CD4-positive, alpha-beta memory T cell (primary cell): ENCODE measurements at regions of chr1 and their contacts with region 1.

Region 1: DNA sequence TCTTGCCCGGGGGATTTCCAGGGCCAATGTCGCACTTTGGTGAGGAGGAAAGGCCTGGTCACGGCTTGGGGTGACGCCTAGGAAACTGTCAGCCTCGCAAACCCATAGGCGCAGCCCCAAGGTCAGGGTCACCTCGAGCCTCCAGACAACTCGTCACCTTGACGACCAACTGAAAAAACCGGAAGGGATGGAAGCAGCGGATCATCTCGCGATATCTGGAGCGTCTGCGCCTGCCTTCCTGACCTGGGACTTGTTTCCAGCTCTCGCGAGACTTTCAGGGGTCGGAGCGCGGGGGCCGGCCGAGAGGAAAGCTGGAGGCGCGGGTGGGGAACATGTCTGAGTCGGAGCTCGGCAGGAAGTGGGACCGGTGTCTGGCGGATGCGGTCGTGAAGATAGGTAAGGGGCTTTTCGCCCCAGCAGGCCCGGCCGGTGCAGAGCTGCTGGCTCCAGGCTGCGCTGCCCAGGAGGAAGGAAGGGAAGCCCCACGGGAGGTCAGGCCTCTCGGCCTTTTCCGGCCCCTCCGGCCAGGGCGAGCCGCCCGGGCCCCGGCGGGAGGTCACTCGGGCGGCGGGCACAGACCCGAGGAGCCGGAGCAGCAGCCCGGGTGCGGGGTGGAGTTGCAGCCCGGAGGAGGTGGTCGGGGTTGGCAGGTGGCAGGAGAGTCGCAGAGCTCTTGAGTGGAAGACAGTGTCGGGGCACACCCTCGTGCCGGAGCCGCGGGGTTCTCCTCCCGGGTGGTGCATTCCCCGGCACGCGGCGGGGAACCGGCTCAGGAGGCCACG is 47.2 kb upstream of the NBL1 start:
- DNase-seq: peak; percentile 97 to 99 (median 98)
- H3K4me3 ChIP-seq: peak overlapping the region; percentile 63 to 88
- H3K4me3 Mint-ChIP-seq: peak overlapping the region; percentile 89 to 100 (median 98)
- H3K27ac ChIP-seq: peak overlapping the region; percentile 100
- H3K27ac Mint-ChIP-seq: peak overlapping the region; percentile 98 to 100 (median 100)
- H3K4me1 ChIP-seq: peaks cover 51% of the 10 kb centered on the region
- H3K4me1 Mint-ChIP-seq: peaks cover 33 to 54% (median 44%) of the 10 kb centered on the region in 4 donors
- H3K27me3 ChIP-seq: no peaks in the 10 kb centered on the region
- H3K27me3 Mint-ChIP-seq: peaks cover 0 to 4% of the 10 kb centered on the region in 2 donors

Region 2: GRCh38 chr1:19240673-19241538 is 356.0 kb before region 1 on chr1:
- CTCF ChIA-PET with region 1: no interaction called
- POLR2A ChIA-PET with region 1: no interaction called
- intact Hi-C with region 1: loop called (anchors 10 kb)
- DNase-seq: peak; percentile 62 to 67 (median 65)
- H3K4me3 ChIP-seq: no peak overlapping the region
- H3K4me3 Mint-ChIP-seq: no peak overlapping the region
- H3K27ac ChIP-seq: no peak overlapping the region
- H3K27ac Mint-ChIP-seq: peak overlapping the region in 6 of 7 donors; percentile 36 to 91 (median 67)
- H3K4me1 ChIP-seq: no peaks in the 10 kb centered on the region
- H3K4me1 Mint-ChIP-seq: peaks cover 0 to 2% (median under 1%) of the 10 kb centered on the region in 4 donors
- H3K27me3 ChIP-seq: no peaks in the 10 kb centered on the region
- H3K27me3 Mint-ChIP-seq: no peaks in the 10 kb centered on the region

Region 3: DNA sequence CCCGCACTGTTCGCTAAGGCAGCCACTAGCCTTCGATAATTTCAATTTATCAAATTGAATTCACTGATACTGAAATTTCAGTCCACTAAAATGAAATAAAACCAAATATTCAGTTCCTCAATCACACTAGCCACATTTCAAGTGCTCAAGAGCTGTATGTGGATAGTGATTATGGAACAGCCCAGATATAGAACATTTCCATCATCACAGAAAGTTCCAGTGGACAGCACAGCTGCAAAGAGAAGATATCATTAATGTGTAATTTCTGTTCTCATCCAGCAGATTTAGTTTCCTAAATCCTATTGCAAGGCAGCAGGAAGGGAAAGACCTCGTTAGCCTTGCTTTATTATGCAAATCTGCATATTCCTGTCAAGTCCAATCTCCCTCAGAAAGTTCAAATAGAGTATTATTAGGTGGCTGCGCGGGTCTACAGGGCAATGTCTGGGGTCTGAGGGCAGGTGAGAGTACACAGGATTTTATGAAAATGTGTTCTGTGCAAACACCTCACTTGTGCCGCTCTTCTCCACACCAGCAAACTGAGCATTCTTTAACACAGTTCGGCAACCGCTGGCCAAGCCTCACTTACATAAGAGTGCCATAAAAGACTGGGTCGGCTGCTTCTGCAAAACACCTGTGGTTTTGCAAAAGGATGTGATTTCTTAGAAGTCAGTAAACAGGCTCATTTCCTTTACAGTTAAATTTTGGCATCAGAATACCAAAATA is 134.0 kb before region 1 on chr1:
- CTCF ChIA-PET with region 1: interaction called, 4 read pairs
- POLR2A ChIA-PET with region 1: interaction called, 16 read pairs
- intact Hi-C with region 1: loop called (anchors 2 kb)
- DNase-seq: peak; percentile 78 to 88 (median 83)
- H3K4me3 ChIP-seq: peak overlapping the region; percentile 5 to 46
- H3K4me3 Mint-ChIP-seq: peak overlapping the region; percentile 81 to 93 (median 86)
- H3K27ac ChIP-seq: peak overlapping the region; percentile 71
- H3K27ac Mint-ChIP-seq: peak overlapping the region; percentile 90 to 96 (median 95)
- H3K4me1 ChIP-seq: peaks cover 99% of the 10 kb centered on the region
- H3K4me1 Mint-ChIP-seq: peaks cover 73 to 94% (median 82%) of the 10 kb centered on the region in 4 donors
- H3K27me3 ChIP-seq: no peaks in the 10 kb centered on the region
- H3K27me3 Mint-ChIP-seq: no peaks in the 10 kb centered on the region

Region 4: GRCh38 chr1:19514391-19514831 is 82.5 kb before region 1 on chr1:
- CTCF ChIA-PET with region 1: no interaction called
- POLR2A ChIA-PET with region 1: no interaction called
- intact Hi-C with region 1: no loop called
- DNase-seq: no peak
- H3K4me3 ChIP-seq: no peak overlapping the region
- H3K4me3 Mint-ChIP-seq: no peak overlapping the region
- H3K27ac ChIP-seq: no peak overlapping the region
- H3K27ac Mint-ChIP-seq: no peak overlapping the region
- H3K4me1 ChIP-seq: peaks cover under 1% of the 10 kb centered on the region
- H3K4me1 Mint-ChIP-seq: peaks cover 0 to 6% (median 2%) of the 10 kb centered on the region in 4 donors
- H3K27me3 ChIP-seq: no peaks in the 10 kb centered on the region
- H3K27me3 Mint-ChIP-seq: no peaks in the 10 kb centered on the region

Region 5: DNA sequence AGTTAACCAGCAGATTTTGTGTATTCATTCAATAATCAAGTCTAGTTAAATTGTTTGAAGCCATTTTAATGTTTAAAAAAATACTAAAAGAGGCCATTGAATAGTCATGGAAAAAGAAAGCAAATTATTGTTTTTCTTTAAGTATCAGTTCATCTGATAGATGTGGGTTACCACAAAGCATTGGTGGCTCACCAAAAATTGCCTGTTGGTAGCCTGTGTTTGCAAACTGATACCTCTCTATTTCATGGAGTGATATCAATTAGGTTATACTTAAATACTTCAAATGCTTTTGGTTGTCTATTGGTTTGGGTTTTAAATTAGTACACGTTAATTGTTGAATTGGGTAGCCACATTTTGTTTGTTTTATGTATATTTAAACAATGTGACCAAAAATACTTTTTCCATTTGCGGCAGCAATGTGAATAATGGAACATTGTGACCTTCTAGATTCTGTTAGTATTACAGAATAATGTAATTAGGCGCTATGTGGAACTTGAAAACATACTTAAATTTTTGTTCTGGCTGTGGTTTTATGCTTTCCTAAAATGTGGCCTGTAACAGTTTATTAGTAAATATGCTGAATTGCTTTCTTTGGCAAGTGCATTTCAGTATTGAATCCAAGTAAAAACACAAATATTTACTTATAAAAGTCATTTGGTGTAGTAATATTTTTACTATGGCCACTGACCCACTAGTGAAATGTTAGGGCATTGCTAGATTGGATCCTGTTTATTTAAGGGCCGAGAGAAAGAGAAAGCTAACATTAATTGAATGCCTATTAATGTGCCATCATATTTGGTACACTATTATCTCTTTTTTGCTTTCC is 10.1 kb after region 1 on chr1:
- CTCF ChIA-PET with region 1: interaction called, 8 read pairs
- POLR2A ChIA-PET with region 1: interaction called, 46 read pairs
- intact Hi-C with region 1: no loop called
- DNase-seq: peak; percentile 78 to 89 (median 79)
- H3K4me3 ChIP-seq: peak overlapping the region in 1 of 2 donors; percentile 20
- H3K4me3 Mint-ChIP-seq: peak overlapping the region; percentile 39 to 86 (median 76)
- H3K27ac ChIP-seq: peak overlapping the region; percentile 44
- H3K27ac Mint-ChIP-seq: peak overlapping the region; percentile 83 to 100 (median 92)
- H3K4me1 ChIP-seq: peaks cover 60% of the 10 kb centered on the region
- H3K4me1 Mint-ChIP-seq: peaks cover 39 to 77% (median 61%) of the 10 kb centered on the region in 4 donors
- H3K27me3 ChIP-seq: no peaks in the 10 kb centered on the region
- H3K27me3 Mint-ChIP-seq: no peaks in the 10 kb centered on the region

Region 6: DNA sequence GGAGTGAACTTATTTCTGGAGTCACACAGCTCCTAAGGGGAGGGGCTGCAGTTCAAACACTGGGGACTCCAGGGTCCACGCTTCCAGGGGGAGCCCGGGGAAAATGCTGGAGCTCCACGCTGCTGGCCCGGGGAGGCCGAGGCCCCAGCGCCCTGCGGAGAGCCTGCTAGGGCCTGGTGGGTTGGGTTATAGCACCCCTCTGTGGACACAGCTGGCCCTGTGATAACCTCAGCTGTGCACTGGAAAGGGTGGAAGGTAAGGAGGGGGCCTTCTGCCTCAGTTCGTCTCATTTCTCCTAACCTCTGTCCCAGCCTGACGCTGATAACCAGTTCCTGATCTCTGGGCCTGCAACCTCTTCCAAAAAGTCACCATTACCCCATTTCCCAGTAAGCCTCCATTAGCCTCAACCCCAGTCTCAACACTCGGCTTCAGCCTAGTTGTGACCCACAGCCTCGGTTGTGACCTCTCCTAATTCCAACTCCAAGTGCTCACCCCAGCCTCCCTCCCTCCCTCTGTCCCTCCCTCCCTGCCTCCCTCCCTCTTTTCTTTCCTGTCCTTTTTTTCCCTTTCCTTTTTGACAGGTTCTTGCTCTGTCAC is 54.3 kb after region 1 on chr1:
- CTCF ChIA-PET with region 1: interaction called, 6 read pairs
- POLR2A ChIA-PET with region 1: interaction called, 45 read pairs
- intact Hi-C with region 1: no loop called
- DNase-seq: peak; percentile 35 to 48 (median 47)
- H3K4me3 ChIP-seq: no peak overlapping the region
- H3K4me3 Mint-ChIP-seq: no peak overlapping the region
- H3K27ac ChIP-seq: no peak overlapping the region
- H3K27ac Mint-ChIP-seq: peak overlapping the region in 3 of 7 donors; percentile 23 to 78 (median 57)
- H3K4me1 ChIP-seq: peaks cover 18% of the 10 kb centered on the region
- H3K4me1 Mint-ChIP-seq: peaks cover 15 to 45% (median 24%) of the 10 kb centered on the region in 4 donors
- H3K27me3 ChIP-seq: no peaks in the 10 kb centered on the region
- H3K27me3 Mint-ChIP-seq: no peaks in the 10 kb centered on the region